Endothelial cell of umbilical vein (primary cell): ENCODE measurements at regions of chr11 and their contacts with region 1.

Region 1: DNA sequence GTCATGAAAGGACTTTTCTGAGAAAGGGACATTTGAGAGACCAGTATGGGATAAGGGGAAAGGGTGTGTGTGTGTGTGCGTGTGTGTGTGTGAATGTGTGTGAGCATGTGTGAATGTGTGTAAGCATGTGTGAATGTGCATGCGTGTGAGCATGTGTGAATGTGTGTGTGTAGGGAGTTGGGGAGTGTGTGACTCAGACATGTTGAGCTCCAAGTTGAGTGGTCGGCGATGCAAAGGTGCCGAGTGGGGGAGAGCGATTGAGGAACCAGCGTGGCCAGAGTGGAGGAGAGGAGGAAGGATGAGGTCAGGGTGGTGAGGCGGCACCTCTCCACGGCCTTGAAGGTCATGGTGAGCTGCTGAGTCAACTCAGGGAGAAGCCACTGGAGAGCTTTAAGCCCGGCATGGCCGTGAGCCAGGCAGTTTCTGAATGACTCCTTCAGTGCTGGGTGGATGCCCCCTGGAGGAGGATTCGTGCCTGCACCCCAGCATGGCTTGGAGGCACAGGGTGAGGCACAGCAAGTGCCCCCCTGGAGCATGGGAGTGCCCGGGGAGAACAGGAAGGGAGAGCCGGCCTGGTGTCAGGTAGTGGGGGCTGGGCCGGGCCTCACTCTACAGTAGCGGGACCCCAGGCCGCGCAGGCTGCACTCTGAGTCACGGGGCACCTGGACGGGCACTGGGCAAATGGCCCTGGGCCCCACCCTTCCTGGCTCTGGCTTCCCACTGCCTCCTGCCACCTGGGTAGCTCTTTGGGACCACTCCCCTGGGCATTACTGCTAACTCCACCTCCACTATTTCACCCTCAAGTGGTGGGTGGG is 8.2 kb upstream of the CCDC88B start:
- DNase-seq: peak; percentile 74
- H3K4me3 ChIP-seq: no peak overlapping the region
- H3K27ac ChIP-seq: no peak overlapping the region
- H3K4me1 ChIP-seq: peaks cover 3% of the 10 kb centered on the region
- H3K27me3 ChIP-seq: no peaks in the 10 kb centered on the region
- CTCF ChIP-seq: peak; percentile 64 to 82
- POLR2A ChIP-seq: no peak

Region 2: DNA sequence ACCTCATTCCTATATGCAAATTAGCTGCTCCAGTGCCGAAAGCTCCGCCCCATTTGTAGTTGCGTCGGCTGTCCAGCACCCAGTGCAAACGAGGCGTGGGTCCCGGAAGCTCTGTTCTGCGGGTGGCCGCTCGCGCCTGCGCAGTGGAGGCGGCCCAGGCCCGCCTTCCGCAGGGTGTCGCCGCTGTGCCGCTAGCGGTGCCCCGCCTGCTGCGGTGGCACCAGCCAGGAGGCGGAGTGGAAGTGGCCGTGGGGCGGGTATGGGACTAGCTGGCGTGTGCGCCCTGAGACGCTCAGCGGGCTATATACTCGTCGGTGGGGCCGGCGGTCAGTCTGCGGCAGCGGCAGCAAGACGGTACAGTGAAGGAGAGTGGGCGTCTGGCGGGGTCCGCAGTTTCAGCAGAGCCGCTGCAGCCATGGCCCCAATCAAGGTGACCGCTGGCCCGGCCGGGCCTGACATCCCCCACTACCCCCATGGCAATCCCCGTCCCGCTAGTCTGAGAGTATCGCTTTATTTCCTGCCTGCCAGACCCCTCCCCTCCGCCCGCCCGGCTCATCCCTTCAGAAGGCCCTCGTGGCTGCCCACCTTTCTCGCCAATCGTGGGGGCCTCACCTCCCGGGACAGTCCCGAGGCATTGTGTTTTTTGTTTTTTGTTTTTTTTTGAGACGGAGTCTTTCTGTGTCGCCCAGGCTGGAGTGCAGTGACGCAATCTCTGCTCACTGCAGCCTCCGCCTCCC is 13.6 kb before region 1 on chr11 and contains the start of gene PRDX5:
- CTCF ChIA-PET with region 1: interaction called, 71 read pairs
- POLR2A ChIA-PET with region 1: interaction called, 6 read pairs
- dilution Hi-C with region 1: no loop called
- intact Hi-C with region 1: loop called (anchors 2 kb)
- DNase-seq: peak; percentile 96
- H3K4me3 ChIP-seq: peak within 1 kb of the TSS; percentile 57 to 76 (median 75)
- H3K27ac ChIP-seq: peak within 1 kb of the TSS; percentile 87
- H3K4me1 ChIP-seq: peaks cover 10% of the 10 kb centered on the region
- H3K27me3 ChIP-seq: no peaks in the 10 kb centered on the region
- CTCF ChIP-seq: peak in 1 of 2 donors; percentile 32
- POLR2A ChIP-seq: peak; percentile 64
- total RNA-seq, gene PRDX5: 199 and 202 TPM in 2 replicates

Region 3: DNA sequence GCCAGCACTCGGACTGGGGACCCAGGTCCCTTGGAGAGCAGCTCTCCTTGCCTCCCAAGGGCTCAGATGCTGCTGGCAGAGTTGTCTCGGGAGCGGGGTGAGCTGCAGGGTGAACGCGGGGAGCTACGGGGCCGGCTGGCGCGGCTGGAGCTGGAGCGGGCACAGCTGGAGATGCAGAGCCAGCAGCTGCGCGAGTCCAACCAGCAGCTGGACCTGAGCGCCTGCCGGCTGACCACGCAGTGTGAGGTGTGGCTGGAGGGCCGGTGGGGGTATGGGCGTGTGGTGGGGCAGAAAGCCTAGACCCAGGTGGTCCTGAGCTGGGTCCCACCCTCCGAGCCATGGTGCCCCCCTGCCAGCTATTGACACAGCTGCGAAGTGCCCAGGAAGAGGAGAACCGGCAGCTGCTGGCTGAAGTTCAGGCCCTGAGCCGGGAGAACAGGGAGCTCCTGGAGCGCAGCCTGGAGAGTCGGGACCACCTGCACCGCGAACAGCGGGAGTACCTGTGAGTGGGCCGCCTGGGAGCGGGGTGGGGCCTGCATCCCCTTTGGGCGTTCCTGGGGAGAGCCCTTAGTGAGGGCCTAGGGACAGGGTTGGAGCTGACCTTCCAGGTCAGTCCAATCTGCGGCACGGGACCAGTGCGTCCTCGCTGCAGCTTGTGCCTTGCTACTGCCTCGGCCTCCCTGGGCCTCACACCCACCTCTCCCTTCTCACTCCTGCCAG is 21.4 kb after region 1 on chr11:
- CTCF ChIA-PET with region 1: interaction called, 39 read pairs
- POLR2A ChIA-PET with region 1: no interaction called
- dilution Hi-C with region 1: no loop called
- intact Hi-C with region 1: no loop called
- DNase-seq: no peak
- H3K4me3 ChIP-seq: no peak overlapping the region
- H3K27ac ChIP-seq: no peak overlapping the region
- H3K4me1 ChIP-seq: peaks cover 12% of the 10 kb centered on the region
- H3K27me3 ChIP-seq: no peaks in the 10 kb centered on the region
- CTCF ChIP-seq: no peak
- POLR2A ChIP-seq: no peak

Region 4: DNA sequence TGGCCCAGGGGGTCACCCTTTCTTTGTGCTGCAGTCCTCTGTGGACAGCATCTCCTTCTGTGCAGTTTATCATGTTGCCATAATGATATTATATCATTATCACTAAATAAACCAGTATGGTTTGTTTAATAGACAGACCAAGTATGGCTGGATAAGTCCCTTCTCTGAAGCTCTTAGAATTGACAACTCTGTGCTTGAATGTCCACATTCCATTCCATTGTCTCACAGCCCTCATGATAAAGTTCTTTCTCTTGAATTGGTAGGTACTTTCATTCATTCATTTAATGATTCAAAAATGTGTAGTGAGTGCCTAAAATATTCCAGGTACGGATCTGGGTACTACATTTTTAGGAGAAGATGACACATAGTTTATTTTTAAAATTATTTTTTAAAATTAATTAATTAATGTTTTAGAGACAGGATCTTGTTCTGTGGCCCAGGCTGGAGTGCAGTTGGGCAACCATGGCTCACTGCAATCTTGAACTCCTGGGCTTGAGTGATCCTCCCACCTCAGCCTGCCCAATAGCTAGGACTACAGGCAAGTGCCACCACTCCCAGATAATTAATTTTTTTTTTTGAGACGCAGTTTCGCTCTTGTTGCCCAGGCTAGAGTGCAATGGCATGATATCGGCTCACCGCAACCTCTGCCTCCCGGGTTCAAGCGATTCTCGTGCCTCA is 35.1 kb after region 1 on chr11:
- CTCF ChIA-PET with region 1: no interaction called
- POLR2A ChIA-PET with region 1: no interaction called
- dilution Hi-C with region 1: no loop called
- intact Hi-C with region 1: no loop called
- DNase-seq: no peak
- H3K4me3 ChIP-seq: no peak overlapping the region
- H3K27ac ChIP-seq: no peak overlapping the region
- H3K4me1 ChIP-seq: no peaks in the 10 kb centered on the region
- H3K27me3 ChIP-seq: no peaks in the 10 kb centered on the region
- CTCF ChIP-seq: no peak
- POLR2A ChIP-seq: no peak

Region 5: GRCh38 chr11:64936539-64936938 is 604.8 kb after region 1 on chr11:
- CTCF ChIA-PET with region 1: no interaction called
- POLR2A ChIA-PET with region 1: no interaction called
- dilution Hi-C with region 1: no loop called
- intact Hi-C with region 1: no loop called
- DNase-seq: no peak
- H3K4me3 ChIP-seq: no peak overlapping the region
- H3K27ac ChIP-seq: no peak overlapping the region
- H3K4me1 ChIP-seq: no peaks in the 10 kb centered on the region
- H3K27me3 ChIP-seq: no peaks in the 10 kb centered on the region
- CTCF ChIP-seq: no peak
- POLR2A ChIP-seq: no peak